AG04450 (cell line): ENCODE measurements at regions of chr5 and their contacts with region 1.

Region 1: GRCh38 chr5:34915139-34915855 is at the starts of genes BRIX1 and RAD1:
- DNase-seq: peak; percentile 90
- H3K4me3 ChIP-seq: peak within 1 kb of the TSS; percentile 98
- H3K27ac ChIP-seq: peak within 1 kb of the TSS; percentile 77
- H3K27me3 ChIP-seq: no peaks in the 10 kb centered on the region
- CTCF ChIP-seq: no peak
- polyA plus RNA-seq, gene BRIX1: 34.3 and 49.2 TPM in 2 replicates
- polyA plus RNA-seq, gene RAD1: 34.5 and 40.9 TPM in 2 replicates

Region 2: DNA sequence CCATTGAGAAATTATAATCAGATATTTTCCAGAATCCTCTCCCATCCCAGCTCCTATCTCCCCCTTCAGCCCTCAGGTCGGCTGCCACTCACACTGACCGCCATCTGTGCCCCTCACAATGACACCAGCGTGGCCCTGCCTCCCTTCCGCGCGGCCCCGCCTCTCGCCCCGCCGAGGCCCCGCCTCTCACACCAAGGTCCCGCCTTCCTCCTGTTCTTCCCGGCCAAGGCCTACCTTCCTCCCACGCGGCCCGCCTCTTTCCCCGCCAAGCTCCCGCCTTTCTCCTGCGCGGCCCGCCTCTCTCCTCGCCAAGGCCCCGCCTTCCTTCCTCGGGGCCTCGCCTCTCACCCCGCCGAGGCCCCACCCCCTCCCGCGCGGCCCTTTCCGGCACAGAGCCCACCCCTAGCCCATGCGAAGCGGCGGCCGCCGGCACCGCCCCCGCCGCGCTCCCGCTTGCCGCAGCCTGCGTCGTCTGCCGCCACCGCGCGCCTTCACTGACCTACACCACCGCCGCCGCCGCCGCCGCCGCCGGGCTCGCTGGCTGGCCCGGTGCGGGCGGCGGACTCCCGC is 13.9 kb after region 1 on chr5 and contains the start of gene DNAJC21:
- CTCF ChIA-PET with region 1: no interaction called
- POLR2A ChIA-PET with region 1: interaction called, 29 read pairs
- DNase-seq: peak; percentile 82
- H3K4me3 ChIP-seq: peak within 1 kb of the TSS; percentile 83
- H3K27ac ChIP-seq: peak within 1 kb of the TSS; percentile 77
- H3K27me3 ChIP-seq: no peaks in the 10 kb centered on the region
- CTCF ChIP-seq: no peak
- polyA plus RNA-seq, gene DNAJC21: 23.9 and 40.7 TPM in 2 replicates

Region 3: GRCh38 chr5:34982823-34983222 is 67.5 kb after region 1 on chr5:
- CTCF ChIA-PET with region 1: no interaction called
- POLR2A ChIA-PET with region 1: no interaction called
- DNase-seq: no peak
- H3K4me3 ChIP-seq: no peak overlapping the region
- H3K27ac ChIP-seq: no peak overlapping the region
- H3K27me3 ChIP-seq: peaks cover 19% of the 10 kb centered on the region
- CTCF ChIP-seq: no peak